H1 (cell line): ENCODE measurements at regions of chr19 and their contacts with region 1.

Region 1: GRCh38 chr19:47436712-47437401 is 17.5 kb upstream of the MEIS3 start:
- DNase-seq: peak in 1 of 2 experiments; percentile 96
- H3K4me3 ChIP-seq: no peak overlapping the region
- H3K27ac ChIP-seq: no peak overlapping the region
- H3K4me1 ChIP-seq: peaks cover 0 to 4% (median 1%) of the 10 kb centered on the region in 4 experiments; a peak in 2 of 7 replicates
- H3K27me3 ChIP-seq: no peaks in the 10 kb centered on the region; a peak in 1 of 7 replicates
- CTCF ChIP-seq: peak; percentile 93 to 95 (median 94)
- EP300 ChIP-seq: no peak
- POLR2A ChIP-seq: no peak
- RAD21 ChIP-seq: peak; percentile 96 to 98

Region 2: GRCh38 chr19:47302249-47302648 is 134.6 kb before region 1 on chr19:
- CTCF ChIA-PET with region 1: no interaction called
- POLR2A ChIA-PET with region 1: no interaction called
- DNase-seq: no peak
- H3K4me3 ChIP-seq: no peak overlapping the region
- H3K27ac ChIP-seq: no peak overlapping the region
- H3K4me1 ChIP-seq: peaks cover 0 to 4% (median 0%) of the 10 kb centered on the region in 4 experiments; a peak in 2 of 7 replicates
- H3K27me3 ChIP-seq: no peaks in the 10 kb centered on the region
- CTCF ChIP-seq: no peak
- EP300 ChIP-seq: no peak
- POLR2A ChIP-seq: no peak
- RAD21 ChIP-seq: no peak

Region 3: DNA sequence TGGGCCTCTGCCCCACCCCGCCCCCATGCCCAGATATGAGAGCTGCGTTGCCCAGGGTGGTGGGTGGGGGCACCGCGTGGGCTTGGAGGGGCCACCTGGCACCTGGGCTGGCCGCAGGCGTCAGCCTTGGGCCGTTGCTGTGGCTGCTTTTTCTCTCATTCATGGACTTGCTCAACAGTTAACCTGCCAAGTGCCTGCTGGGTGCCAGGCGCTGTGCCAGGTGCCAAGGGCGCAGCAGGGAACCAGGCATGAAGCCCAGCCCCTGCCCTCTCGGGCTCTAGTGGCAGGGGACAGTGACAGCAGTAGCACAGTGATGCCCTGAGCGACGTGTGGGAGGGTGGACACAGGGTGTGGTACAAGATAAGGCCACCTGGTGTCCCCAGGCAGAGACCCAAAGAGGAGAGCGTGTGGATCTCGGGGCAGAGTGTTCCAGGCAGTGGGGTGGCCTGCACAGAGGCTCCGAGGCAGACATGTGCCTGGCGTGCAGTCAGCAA is 59.6 kb before region 1 on chr19:
- CTCF ChIA-PET with region 1: no interaction called
- POLR2A ChIA-PET with region 1: no interaction called
- DNase-seq: no peak
- H3K4me3 ChIP-seq: no peak overlapping the region
- H3K27ac ChIP-seq: no peak overlapping the region
- H3K4me1 ChIP-seq: no peaks in the 10 kb centered on the region
- H3K27me3 ChIP-seq: no peaks in the 10 kb centered on the region
- CTCF ChIP-seq: peak in 1 of 3 experiments; percentile 8; a peak in 1 of 4 replicates
- EP300 ChIP-seq: no peak
- POLR2A ChIP-seq: no peak
- RAD21 ChIP-seq: no peak

Region 4: DNA sequence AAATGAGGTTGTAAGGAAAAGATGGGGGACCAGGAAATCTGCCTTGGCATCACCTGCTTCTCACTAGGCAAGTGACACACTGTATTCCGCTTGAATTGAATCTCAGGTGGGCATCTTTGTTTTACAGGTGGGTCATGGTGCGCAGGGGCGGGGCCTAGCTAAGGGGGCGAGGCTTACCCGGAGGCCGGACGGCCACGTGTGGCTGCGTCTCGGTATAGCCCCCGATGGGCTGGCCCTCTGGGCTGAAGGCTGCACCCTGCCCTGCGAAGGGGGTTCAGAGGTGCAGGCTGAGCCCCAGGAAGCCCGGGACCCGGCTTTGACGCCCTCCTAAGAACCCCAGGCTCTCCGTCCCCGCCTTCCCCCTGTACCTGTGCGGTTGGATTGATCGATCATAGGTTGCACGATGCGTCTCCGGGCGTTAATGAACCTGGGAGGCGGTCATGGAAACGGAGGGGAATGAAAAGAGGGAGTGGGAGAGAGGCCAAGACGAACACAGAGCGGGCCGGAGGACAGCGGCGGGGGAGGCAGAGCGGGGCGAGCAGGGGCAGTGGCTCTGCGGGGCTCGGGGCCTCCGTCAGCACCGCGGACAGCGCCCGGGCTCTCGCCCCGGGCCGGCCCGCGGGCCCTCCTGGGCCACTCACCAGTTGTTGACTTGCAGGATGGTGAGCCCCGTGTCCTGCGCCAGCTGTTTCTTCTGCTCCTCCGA is 30.0 kb before region 1 on chr19:
- CTCF ChIA-PET with region 1: no interaction called
- POLR2A ChIA-PET with region 1: no interaction called
- DNase-seq: peak in 1 of 2 experiments; percentile 88
- H3K4me3 ChIP-seq: peak overlapping the region; percentile 17 to 68 (median 48); a peak in 7 of 8 replicates
- H3K27ac ChIP-seq: no peak overlapping the region
- H3K4me1 ChIP-seq: peaks cover 0 to 5% (median 4%) of the 10 kb centered on the region in 4 experiments; a peak in 4 of 7 replicates
- H3K27me3 ChIP-seq: no peaks in the 10 kb centered on the region
- CTCF ChIP-seq: no peak
- EP300 ChIP-seq: no peak
- POLR2A ChIP-seq: no peak; a peak in 1 of 3 replicates
- RAD21 ChIP-seq: no peak

Region 5: GRCh38 chr19:47447470-47448359 is 10.9 kb after region 1 on chr19:
- CTCF ChIA-PET with region 1: interaction called, 19 read pairs
- POLR2A ChIA-PET with region 1: interaction called, 5 read pairs
- DNase-seq: peak; percentile 95 to 100
- H3K4me3 ChIP-seq: peak overlapping the region; percentile 56 to 79 (median 70)
- H3K27ac ChIP-seq: peak overlapping the region; percentile 56; the same call in 1 of the 2 replicates
- H3K4me1 ChIP-seq: peaks cover 7 to 18% (median 11%) of the 10 kb centered on the region in 4 experiments
- H3K27me3 ChIP-seq: peaks cover 0 to 9% (median 9%) of the 10 kb centered on the region in 4 experiments; a peak in 5 of 7 replicates
- CTCF ChIP-seq: peak in 1 of 3 experiments; percentile 0; a peak in 1 of 4 replicates
- EP300 ChIP-seq: no peak
- POLR2A ChIP-seq: no peak
- RAD21 ChIP-seq: no peak

Region 6: GRCh38 chr19:47456721-47457478 is 20.0 kb after region 1 on chr19:
- CTCF ChIA-PET with region 1: interaction called, 14 read pairs
- POLR2A ChIA-PET with region 1: no interaction called
- DNase-seq: no peak
- H3K4me3 ChIP-seq: peak overlapping the region in 1 of 4 experiments; percentile 47; a peak in 2 of 8 replicates
- H3K27ac ChIP-seq: no peak overlapping the region
- H3K4me1 ChIP-seq: peaks cover 0 to 4% (median 0%) of the 10 kb centered on the region in 4 experiments; a peak in 2 of 7 replicates
- H3K27me3 ChIP-seq: peaks cover 0 to 17% (median 5%) of the 10 kb centered on the region in 4 experiments; a peak in 4 of 7 replicates
- CTCF ChIP-seq: no peak
- EP300 ChIP-seq: no peak
- POLR2A ChIP-seq: no peak
- RAD21 ChIP-seq: no peak

Region 7: DNA sequence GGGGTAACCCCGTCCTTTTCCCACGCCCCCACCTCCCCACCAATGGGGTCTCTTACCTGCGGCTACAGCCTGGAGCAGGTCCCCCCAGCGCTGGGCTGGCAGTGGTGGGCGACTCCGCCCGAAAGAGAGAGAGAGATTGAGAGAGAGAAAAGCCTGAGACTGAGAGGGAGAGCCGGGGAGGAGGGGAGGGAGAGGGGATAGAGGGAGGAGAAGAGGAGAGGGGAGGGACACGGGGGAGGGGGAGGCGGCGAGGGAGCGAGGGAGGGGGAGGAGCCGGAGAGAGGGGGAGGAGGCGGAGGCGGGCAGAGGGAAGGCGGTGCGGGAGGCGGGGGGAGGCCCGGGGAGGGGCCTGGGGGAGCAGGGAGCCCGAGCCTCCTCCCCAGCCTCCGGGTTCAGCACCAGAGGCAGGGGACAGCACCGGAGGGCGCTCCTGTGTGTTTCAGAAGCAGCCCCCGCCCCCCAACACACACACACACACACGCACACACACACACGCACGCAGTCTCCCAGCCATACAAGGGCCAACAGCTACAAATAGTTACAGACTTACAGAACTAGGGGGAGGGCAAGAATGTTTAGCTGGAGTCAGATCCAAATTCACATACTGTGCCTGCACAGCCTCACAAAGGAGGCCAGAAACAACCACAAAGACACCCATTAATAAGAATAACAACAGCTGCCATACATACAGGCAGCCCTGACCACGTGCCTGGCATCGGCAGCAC is 35.0 kb after region 1 on chr19 and contains the start of gene SLC8A2:
- CTCF ChIA-PET with region 1: interaction called, 80 read pairs
- POLR2A ChIA-PET with region 1: interaction called, 9 read pairs
- DNase-seq: peak; percentile 70 to 89
- H3K4me3 ChIP-seq: peak within 1 kb of the TSS; percentile 61 to 86 (median 68)
- H3K27ac ChIP-seq: no peak within 1 kb of the TSS
- H3K4me1 ChIP-seq: peaks cover 4 to 33% (median 18%) of the 10 kb centered on the region in 4 experiments
- H3K27me3 ChIP-seq: peaks cover 0 to 5% (median 3%) of the 10 kb centered on the region in 4 experiments; a peak in 3 of 7 replicates
- CTCF ChIP-seq: no peak
- EP300 ChIP-seq: no peak
- POLR2A ChIP-seq: no peak
- RAD21 ChIP-seq: no peak
- total RNA-seq, gene SLC8A2: 7.3 and 8.3 TPM in 2 replicates

Region 8: DNA sequence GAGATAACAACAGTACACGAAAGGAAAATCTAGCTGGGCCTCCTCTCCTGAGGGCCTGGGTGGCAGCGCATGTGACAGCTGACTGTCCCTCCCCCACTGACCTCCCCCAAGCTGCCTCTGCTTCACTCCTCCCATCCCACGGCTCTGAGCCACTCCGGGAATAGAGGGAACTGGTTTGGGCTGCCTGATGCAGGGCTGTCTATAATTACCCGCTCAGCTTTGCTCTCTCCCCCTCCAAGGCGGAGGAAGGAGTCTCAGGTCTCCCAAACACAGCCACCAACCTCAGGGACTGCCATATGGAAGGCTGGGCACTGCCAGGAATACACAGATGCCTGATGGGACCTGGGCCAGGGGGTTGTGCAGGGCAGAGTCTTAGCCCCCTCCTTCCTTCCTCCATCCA is 70.2 kb after region 1 on chr19:
- CTCF ChIA-PET with region 1: interaction called, 11 read pairs
- POLR2A ChIA-PET with region 1: interaction called, 3 read pairs
- DNase-seq: no peak
- H3K4me3 ChIP-seq: no peak overlapping the region
- H3K27ac ChIP-seq: 0 out of 2 replicates have a peak overlapping the region, but pooled peaks have one; percentile 22
- H3K4me1 ChIP-seq: peaks cover 0 to 8% (median under 1%) of the 10 kb centered on the region in 4 experiments; a peak in 4 of 7 replicates
- H3K27me3 ChIP-seq: no peaks in the 10 kb centered on the region
- CTCF ChIP-seq: no peak
- EP300 ChIP-seq: no peak
- POLR2A ChIP-seq: no peak
- RAD21 ChIP-seq: no peak

Region 9: GRCh38 chr19:47514869-47515588 is 78.2 kb after region 1 on chr19 and contains the start of gene NAPA:
- CTCF ChIA-PET with region 1: interaction called, 15 read pairs
- POLR2A ChIA-PET with region 1: interaction called, 4 read pairs
- DNase-seq: peak; percentile 100
- H3K4me3 ChIP-seq: peak within 1 kb of the TSS; percentile 88 to 96 (median 94)
- H3K27ac ChIP-seq: peak within 1 kb of the TSS; percentile 60; the same call in 1 of the 2 replicates
- H3K4me1 ChIP-seq: peaks cover 0 to 3% (median 3%) of the 10 kb centered on the region in 4 experiments; a peak in 5 of 7 replicates
- H3K27me3 ChIP-seq: no peaks in the 10 kb centered on the region
- CTCF ChIP-seq: peak in 1 of 3 experiments; percentile 70; a peak in 1 of 4 replicates
- EP300 ChIP-seq: peak in 1 of 2 experiments; percentile 74; a peak in 1 of 3 replicates
- POLR2A ChIP-seq: peak in 1 of 2 experiments; percentile 85; a peak in 2 of 3 replicates
- RAD21 ChIP-seq: peak; percentile 52 to 65
- total RNA-seq, gene NAPA: 58.3 and 58.5 TPM in 2 replicates

Region 10: GRCh38 chr19:47523473-47523872 is 86.6 kb after region 1 on chr19:
- CTCF ChIA-PET with region 1: interaction called, 15 read pairs
- POLR2A ChIA-PET with region 1: no interaction called
- DNase-seq: no peak
- H3K4me3 ChIP-seq: no peak overlapping the region
- H3K27ac ChIP-seq: no peak overlapping the region
- H3K4me1 ChIP-seq: peaks cover 0 to 5% (median 2%) of the 10 kb centered on the region in 4 experiments; a peak in 4 of 7 replicates
- H3K27me3 ChIP-seq: no peaks in the 10 kb centered on the region
- CTCF ChIP-seq: no peak
- EP300 ChIP-seq: no peak
- POLR2A ChIP-seq: no peak
- RAD21 ChIP-seq: no peak

Region 11: DNA sequence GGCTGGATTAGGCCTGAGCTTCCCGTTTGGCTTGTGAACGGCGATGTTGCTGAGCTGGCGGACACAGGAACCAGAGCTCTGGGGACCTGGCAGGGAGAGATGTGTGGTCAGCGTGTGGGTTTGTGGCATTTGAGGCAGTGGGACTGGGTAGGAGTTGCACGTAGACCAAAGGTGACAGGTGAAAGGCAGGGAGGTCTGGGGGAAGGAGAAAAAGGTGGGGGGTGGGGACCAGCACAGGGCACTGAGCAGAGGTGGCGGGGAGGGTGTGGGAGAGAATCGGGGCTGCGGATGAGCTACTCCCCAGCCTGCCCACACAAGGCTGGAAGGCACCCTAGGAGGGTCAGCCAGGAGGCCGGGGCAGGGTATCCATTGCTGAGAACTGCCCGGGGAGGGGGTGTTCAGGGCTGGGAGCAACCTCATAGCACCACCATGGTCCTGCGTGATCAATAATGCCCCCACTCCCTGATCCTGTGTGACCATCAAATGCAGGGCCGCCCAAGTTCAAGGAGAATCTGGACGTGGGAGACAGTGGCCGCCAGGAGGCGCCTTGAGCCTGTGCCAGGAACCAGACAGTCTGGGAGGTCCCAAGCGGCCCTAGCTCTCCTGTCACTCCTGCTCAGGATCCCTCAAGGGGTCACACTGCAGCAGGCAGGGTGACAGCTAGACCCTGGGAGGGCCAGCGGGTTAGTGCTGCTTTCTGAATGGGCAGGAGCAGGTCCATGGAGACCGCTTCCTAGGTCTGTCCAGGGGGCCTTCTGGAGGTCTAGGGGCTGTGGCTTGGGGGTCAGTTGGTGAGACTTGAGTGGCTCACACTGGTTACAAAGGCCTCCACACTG is 328.9 kb after region 1 on chr19:
- CTCF ChIA-PET with region 1: no interaction called
- POLR2A ChIA-PET with region 1: no interaction called
- DNase-seq: peak in 1 of 2 experiments; percentile 93
- H3K4me3 ChIP-seq: no peak overlapping the region
- H3K27ac ChIP-seq: no peak overlapping the region; the same call in 1 of the 2 replicates
- H3K4me1 ChIP-seq: peaks cover 0 to 6% (median 3%) of the 10 kb centered on the region in 4 experiments; a peak in 5 of 7 replicates
- H3K27me3 ChIP-seq: no peaks in the 10 kb centered on the region
- CTCF ChIP-seq: peak; percentile 85 to 95 (median 94)
- EP300 ChIP-seq: no peak
- POLR2A ChIP-seq: no peak
- RAD21 ChIP-seq: peak; percentile 91 to 93